B cell (primary cell): ENCODE measurements at regions of chr19 and their contacts with region 1.

Region 1: DNA sequence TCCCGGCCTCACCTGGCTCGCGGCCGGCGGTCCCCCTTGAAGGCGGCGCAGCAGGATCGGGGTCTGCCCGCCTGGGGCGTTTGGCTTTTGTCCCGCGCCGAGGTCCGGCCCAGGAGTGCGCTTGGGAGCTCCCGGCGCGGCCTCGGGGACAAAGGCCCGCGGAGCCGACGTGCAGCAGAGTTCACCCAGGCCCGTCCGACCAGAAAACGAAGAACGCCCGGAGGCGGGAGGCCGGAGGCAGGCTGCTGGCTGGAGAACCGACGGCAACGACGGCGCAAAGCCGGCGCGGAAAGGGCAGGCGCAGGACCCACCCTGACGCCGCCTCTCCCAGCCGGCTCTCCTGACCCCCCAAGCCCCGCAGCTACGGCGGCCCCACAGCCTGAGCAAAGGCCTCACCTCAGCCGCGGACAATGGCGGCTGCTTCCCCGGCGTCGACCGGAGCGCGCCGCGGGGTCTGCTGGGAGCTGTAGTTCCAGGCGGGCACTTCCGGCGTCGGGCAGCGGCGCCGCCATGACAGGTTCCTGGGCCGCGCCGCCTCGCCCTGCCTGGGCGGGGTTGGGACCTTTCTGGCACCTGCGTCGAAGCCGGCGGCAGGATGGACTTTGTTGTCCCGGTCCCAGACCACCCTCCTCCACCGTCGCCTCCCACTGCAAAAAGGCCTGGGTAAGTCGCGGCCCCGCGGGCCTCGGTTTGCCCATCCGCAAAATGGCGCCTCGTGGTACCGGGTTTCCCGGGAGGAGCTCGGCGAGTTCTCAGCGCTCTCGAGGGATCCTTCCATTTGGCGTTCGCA is at the start of gene ZNF606:
- DNase-seq: peak; percentile 93
- ATAC-seq: peak; percentile 96
- H3K4me3 ChIP-seq: peak within 1 kb of the TSS; percentile 77 to 98 (median 94)
- H3K4me3 Mint-ChIP-seq: peak within 1 kb of the TSS; percentile 91
- H3K27ac ChIP-seq: peak within 1 kb of the TSS; percentile 81 to 91
- H3K27ac Mint-ChIP-seq: peak within 1 kb of the TSS; percentile 88
- H3K4me1 ChIP-seq: peaks cover 22 to 27% of the 10 kb centered on the region in 2 donors
- H3K4me1 Mint-ChIP-seq: peaks cover 35% of the 10 kb centered on the region
- H3K27me3 ChIP-seq: no peaks in the 10 kb centered on the region
- H3K27me3 Mint-ChIP-seq: no peaks in the 10 kb centered on the region
- CTCF ChIP-seq: no peak
- total RNA-seq, gene ZNF606: 48.1 and 48.4 TPM in 2 replicates

Region 2: DNA sequence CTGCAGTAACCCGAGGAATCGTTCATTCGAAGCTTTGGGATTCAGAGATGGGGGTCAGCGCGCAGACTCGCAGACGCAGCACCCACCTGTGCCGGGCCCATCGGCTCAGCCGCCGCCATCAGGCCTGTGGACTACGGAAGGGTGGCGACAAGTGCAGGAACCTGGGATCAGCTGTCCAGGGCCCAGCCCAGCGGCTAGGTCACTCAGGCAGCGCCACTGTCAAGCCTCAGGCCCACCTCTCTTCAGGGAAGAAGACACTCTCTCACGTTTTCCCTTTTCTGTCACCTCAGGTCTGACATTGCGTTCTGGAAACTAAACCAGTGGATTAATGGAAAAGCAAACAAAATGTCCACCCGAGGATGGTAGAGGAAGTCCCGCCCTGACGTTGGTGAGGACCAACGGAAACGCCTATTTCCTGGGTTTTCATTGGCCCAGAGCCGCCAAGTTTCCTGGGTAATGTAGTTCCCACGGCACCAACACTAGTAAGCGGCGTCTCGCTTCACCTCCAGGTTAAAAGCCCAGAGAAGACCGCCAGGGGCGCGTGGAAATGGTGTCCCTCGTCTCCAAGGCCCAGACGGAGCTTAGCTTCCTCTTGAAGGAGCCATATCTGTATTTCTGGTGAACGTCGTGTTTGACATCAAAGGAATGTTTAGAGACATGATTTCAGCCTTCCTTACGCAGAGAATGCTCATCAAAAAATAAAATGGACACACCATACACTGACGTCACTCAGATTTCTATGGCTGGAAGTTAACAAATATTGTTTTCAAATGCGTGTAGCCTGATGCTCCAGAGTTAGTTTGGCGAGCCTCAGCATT is 525.2 kb before region 1 on chr19 and contains the start of gene ZNF772:
- CTCF ChIA-PET with region 1: no interaction called
- POLR2A ChIA-PET with region 1: no interaction called
- intact Hi-C with region 1: loop called (anchors 1 kb)
- DNase-seq: peak; percentile 95
- ATAC-seq: peak; percentile 99
- H3K4me3 ChIP-seq: peak within 1 kb of the TSS; percentile 77 to 91 (median 85)
- H3K4me3 Mint-ChIP-seq: peak within 1 kb of the TSS; percentile 86
- H3K27ac ChIP-seq: peak within 1 kb of the TSS; percentile 65 to 81
- H3K27ac Mint-ChIP-seq: peak within 1 kb of the TSS; percentile 81
- H3K4me1 ChIP-seq: peaks cover 11 to 15% of the 10 kb centered on the region in 2 donors
- H3K4me1 Mint-ChIP-seq: peaks cover 27% of the 10 kb centered on the region
- H3K27me3 ChIP-seq: no peaks in the 10 kb centered on the region
- H3K27me3 Mint-ChIP-seq: peaks cover 10% of the 10 kb centered on the region
- CTCF ChIP-seq: peak; percentile 68
- total RNA-seq, gene ZNF772: 26.2 and 27.4 TPM in 2 replicates

Region 3: DNA sequence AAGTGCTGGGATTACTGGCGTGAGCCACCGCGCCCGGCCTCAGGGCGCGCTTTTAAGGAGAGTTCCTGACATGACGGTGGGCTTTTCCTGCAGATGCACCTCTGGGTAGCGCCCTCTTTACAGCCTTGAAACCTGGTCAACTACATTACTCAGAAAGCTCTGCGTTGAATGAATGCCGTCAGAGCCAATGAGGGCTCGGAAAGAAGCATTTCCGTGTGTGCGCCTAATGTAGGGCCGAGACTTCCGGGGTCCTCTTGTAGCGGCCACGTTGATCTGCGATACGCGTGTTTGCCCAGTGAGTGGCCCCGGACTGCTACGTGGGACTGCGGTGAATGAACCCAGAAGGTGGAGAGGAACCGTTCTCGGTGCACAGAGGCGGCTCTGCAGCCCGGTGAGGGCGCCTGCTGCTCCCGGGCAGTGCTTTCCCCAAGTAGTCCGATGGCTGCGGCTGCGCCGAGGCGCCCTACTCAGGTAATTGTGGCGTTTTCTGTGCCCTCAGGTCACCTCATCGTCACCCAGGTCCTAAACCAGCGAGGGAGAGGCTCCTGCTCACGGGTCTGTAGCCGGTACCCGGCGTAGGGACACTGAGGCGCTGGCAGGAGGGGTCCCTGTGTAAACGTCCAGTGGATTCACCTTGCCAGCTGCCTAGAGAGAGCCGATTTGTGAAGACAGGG is 183.0 kb before region 1 on chr19:
- CTCF ChIA-PET with region 1: no interaction called
- POLR2A ChIA-PET with region 1: no interaction called
- intact Hi-C with region 1: no loop called
- DNase-seq: peak; percentile 90
- ATAC-seq: peak; percentile 83
- H3K4me3 ChIP-seq: peak overlapping the region; percentile 78 to 92 (median 83)
- H3K4me3 Mint-ChIP-seq: peak overlapping the region; percentile 94
- H3K27ac ChIP-seq: peak overlapping the region; percentile 75 to 88
- H3K27ac Mint-ChIP-seq: peak overlapping the region; percentile 97
- H3K4me1 ChIP-seq: peaks cover 12 to 17% of the 10 kb centered on the region in 2 donors
- H3K4me1 Mint-ChIP-seq: peaks cover 58% of the 10 kb centered on the region
- H3K27me3 ChIP-seq: no peaks in the 10 kb centered on the region
- H3K27me3 Mint-ChIP-seq: no peaks in the 10 kb centered on the region
- CTCF ChIP-seq: no peak

Region 4: GRCh38 chr19:57914531-57914930 is 88.0 kb before region 1 on chr19:
- CTCF ChIA-PET with region 1: no interaction called
- POLR2A ChIA-PET with region 1: interaction called, 5 read pairs
- intact Hi-C with region 1: loop called (anchors 1 kb)
- DNase-seq: no peak
- ATAC-seq: no peak
- H3K4me3 ChIP-seq: no peak overlapping the region
- H3K4me3 Mint-ChIP-seq: peak overlapping the region; percentile 96
- H3K27ac ChIP-seq: no peak overlapping the region
- H3K27ac Mint-ChIP-seq: peak overlapping the region; percentile 26
- H3K4me1 ChIP-seq: peaks cover 9 to 13% of the 10 kb centered on the region in 2 donors
- H3K4me1 Mint-ChIP-seq: peaks cover 40% of the 10 kb centered on the region
- H3K27me3 ChIP-seq: no peaks in the 10 kb centered on the region
- H3K27me3 Mint-ChIP-seq: no peaks in the 10 kb centered on the region
- CTCF ChIP-seq: no peak

Region 5: GRCh38 chr19:57947208-57948134 is 55.1 kb before region 1 on chr19 and contains the start of gene ZNF256:
- CTCF ChIA-PET with region 1: no interaction called
- POLR2A ChIA-PET with region 1: no interaction called
- intact Hi-C with region 1: loop called (anchors 1 kb)
- DNase-seq: peak; percentile 95
- ATAC-seq: peak; percentile 99
- H3K4me3 ChIP-seq: peak within 1 kb of the TSS; percentile 71 to 90 (median 87)
- H3K4me3 Mint-ChIP-seq: peak within 1 kb of the TSS; percentile 96
- H3K27ac ChIP-seq: peak within 1 kb of the TSS; percentile 77 to 89
- H3K27ac Mint-ChIP-seq: peak within 1 kb of the TSS; percentile 89
- H3K4me1 ChIP-seq: peaks cover 16 to 27% of the 10 kb centered on the region in 2 donors
- H3K4me1 Mint-ChIP-seq: peaks cover 36% of the 10 kb centered on the region
- H3K27me3 ChIP-seq: peaks cover 0 to 6% (median 0%) of the 10 kb centered on the region in 4 experiments
- H3K27me3 Mint-ChIP-seq: peaks cover 6% of the 10 kb centered on the region
- CTCF ChIP-seq: peak; percentile 61
- total RNA-seq, gene ZNF256: 18.3 and 19.0 TPM in 2 replicates

Region 6: GRCh38 chr19:58059003-58059670 is 56.6 kb after region 1 on chr19 and contains the start of gene ZNF135:
- CTCF ChIA-PET with region 1: no interaction called
- POLR2A ChIA-PET with region 1: interaction called, 7 read pairs
- intact Hi-C with region 1: loop called (anchors 1 kb)
- DNase-seq: peak; percentile 88
- ATAC-seq: peak; percentile 86
- H3K4me3 ChIP-seq: peak within 1 kb of the TSS; percentile 9 to 81 (median 64)
- H3K4me3 Mint-ChIP-seq: peak within 1 kb of the TSS; percentile 86
- H3K27ac ChIP-seq: peak within 1 kb of the TSS; percentile 87 to 92
- H3K27ac Mint-ChIP-seq: peak within 1 kb of the TSS; percentile 91
- H3K4me1 ChIP-seq: peaks cover 8 to 16% of the 10 kb centered on the region in 2 donors
- H3K4me1 Mint-ChIP-seq: peaks cover 14% of the 10 kb centered on the region
- H3K27me3 ChIP-seq: peaks cover 0 to 7% (median 2%) of the 10 kb centered on the region in 4 experiments
- H3K27me3 Mint-ChIP-seq: peaks cover 16% of the 10 kb centered on the region
- CTCF ChIP-seq: no peak
- total RNA-seq, gene ZNF135: 10.0 and 10.1 TPM in 2 replicates

Region 7: DNA sequence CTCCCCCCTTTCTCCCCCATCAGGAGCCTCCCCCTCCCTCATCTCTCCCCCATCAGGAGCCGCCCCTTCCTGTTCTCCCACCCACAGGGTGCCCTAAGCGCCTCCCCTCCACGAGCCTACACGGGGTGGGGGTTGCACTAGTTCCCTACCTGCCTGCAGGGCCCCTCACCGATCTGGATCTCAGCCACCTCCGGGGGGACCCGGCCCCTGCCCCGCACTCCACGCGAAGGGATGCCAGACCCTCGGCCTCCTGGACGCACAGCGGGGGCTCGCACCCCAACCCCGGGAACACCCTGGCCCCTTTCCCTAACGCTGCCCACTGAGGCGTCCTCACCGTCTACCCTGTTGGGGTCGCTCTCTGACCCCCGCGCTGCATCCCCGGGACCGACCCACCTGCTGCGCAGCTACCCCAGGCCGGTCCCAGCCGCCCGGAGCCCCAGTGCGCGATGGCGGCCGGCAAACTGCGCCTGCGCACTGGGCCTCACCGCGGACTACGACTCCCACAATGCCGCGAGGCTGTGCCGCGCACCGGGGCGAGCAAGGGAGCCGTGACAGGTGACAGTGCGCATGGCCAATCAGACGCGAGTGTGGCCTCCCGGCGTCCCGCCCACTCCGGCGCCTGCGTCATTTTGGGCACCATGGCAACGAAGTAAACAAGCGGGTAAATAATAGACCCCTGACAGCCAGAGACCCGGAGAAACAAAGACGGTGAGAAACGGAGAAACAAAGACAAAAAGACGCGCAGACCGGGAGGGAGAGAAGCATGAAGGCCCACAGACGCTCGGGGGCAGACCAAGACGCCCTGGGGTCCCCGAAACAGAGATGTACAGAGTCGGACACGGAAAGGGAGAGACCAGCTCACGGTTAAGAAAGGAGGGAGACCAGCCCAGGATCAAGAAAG is 95.5 kb after region 1 on chr19 and contains the start of gene ZSCAN18:
- CTCF ChIA-PET with region 1: no interaction called
- POLR2A ChIA-PET with region 1: no interaction called
- intact Hi-C with region 1: loop called (anchors 1 kb)
- DNase-seq: peak; percentile 100
- ATAC-seq: peak; percentile 93
- H3K4me3 ChIP-seq: peak within 1 kb of the TSS; percentile 73 to 96 (median 92)
- H3K4me3 Mint-ChIP-seq: peak within 1 kb of the TSS; percentile 81
- H3K27ac ChIP-seq: peak within 1 kb of the TSS; percentile 98 to 100
- H3K27ac Mint-ChIP-seq: peak within 1 kb of the TSS; percentile 97
- H3K4me1 ChIP-seq: peaks cover 13 to 16% of the 10 kb centered on the region in 2 donors
- H3K4me1 Mint-ChIP-seq: peaks cover 18% of the 10 kb centered on the region
- H3K27me3 ChIP-seq: no peaks in the 10 kb centered on the region
- H3K27me3 Mint-ChIP-seq: peaks cover 3% of the 10 kb centered on the region
- CTCF ChIP-seq: no peak
- total RNA-seq, gene ZSCAN18: 84.9 and 90.5 TPM in 2 replicates

Region 8: GRCh38 chr19:58278157-58279041 is 275.8 kb after region 1 on chr19 and contains the start of gene ZNF8:
- CTCF ChIA-PET with region 1: no interaction called
- POLR2A ChIA-PET with region 1: interaction called, 3 read pairs
- intact Hi-C with region 1: loop called (anchors 1 kb)
- DNase-seq: peak; percentile 96
- ATAC-seq: peak; percentile 98
- H3K4me3 ChIP-seq: peak within 1 kb of the TSS; percentile 72 to 98 (median 95)
- H3K4me3 Mint-ChIP-seq: peak within 1 kb of the TSS; percentile 91
- H3K27ac ChIP-seq: peak within 1 kb of the TSS; percentile 73 to 86
- H3K27ac Mint-ChIP-seq: peak within 1 kb of the TSS; percentile 93
- H3K4me1 ChIP-seq: peaks cover 13 to 19% of the 10 kb centered on the region in 2 donors
- H3K4me1 Mint-ChIP-seq: peaks cover 38% of the 10 kb centered on the region
- H3K27me3 ChIP-seq: no peaks in the 10 kb centered on the region
- H3K27me3 Mint-ChIP-seq: no peaks in the 10 kb centered on the region
- CTCF ChIP-seq: no peak
- total RNA-seq, gene ZNF8: 7.9 and 8.0 TPM in 2 replicates